GM10248 (cell line): ENCODE measurements at regions of chr2 and their contacts with region 1.

Region 1: DNA sequence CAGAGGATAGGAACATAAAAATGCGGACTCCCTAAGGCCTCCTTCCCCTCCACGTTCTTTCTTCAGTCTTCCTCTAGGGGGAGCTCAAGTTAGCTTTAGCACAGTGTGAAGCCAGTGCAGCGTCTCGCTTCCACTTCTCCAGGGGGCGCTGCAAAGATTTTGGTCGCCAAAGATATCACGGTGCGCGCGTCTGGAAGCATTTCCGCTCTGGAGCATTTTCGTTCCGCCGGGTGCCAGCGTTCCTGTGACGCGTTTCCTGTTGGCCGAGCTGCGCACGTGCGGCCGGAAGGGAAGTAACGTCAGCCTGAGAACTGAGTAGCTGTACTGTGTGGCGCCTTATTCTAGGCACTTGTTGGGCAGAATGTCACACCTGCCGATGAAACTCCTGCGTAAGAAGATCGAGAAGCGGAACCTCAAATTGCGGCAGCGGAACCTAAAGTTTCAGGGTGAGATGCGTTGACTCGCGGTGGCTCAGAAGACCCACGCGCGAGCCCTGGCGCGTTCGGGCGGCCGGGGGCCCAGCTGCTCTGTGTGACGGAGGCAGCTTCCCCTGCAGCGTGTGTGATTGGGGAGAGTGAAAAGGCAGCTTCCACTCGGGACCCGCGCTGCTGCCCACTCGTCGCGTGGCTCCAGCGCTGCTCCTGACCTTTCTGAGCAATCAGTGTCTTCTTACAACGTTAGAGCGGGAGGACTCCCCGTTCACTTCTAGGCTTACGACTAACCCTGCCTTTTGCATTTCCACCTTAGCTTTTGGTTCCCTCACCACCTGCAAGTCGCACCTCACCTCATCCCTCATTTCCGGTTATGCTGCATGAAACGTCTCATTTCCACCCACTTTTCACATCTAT is at the start of gene DDX18:
- DNase-seq: peak; percentile 87
- CTCF ChIP-seq: peak; percentile 99

Region 2: DNA sequence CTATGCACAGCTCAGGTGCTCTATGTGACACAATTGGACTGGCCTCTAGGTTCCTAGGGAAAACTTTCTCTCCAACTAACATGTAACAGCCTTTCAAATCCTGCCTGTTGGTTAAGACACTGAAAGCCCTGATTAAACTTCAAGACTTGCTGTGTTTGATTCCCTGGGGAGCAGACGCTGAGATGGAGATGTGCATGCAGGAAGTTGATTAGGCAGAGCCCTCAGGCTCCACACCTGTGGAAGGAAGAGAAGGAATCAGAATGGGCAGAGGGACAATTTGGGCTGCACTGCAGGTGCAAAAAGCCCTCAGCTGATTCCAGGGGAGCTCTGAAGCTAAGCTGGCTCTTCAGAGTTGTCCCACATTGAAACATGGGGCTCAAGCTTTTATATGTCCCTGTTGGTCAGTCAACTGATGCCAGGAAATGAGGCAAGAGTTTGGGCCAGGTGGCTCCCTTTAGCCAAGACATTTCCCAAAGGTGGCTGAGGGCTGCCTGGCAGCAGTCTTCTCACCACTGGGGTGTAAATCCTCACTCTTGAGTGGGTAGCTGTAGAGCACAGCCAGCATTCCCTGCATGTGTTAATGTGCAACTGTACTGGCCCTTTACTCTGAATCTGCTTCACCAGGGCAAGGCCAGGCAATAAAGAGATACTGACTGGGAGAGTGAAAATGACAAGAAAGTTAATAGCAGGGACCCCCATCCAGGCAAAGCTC is 199.7 kb before region 1 on chr2:
- CTCF ChIA-PET with region 1: no interaction called
- POLR2A ChIA-PET with region 1: no interaction called
- DNase-seq: no peak
- CTCF ChIP-seq: no peak

Region 3: GRCh38 chr2:117801826-117802225 is 12.8 kb before region 1 on chr2:
- CTCF ChIA-PET with region 1: interaction called, 34 read pairs
- POLR2A ChIA-PET with region 1: no interaction called
- DNase-seq: no peak
- CTCF ChIP-seq: no peak

Region 4: GRCh38 chr2:117825437-117825836 is 10.8 kb after region 1 on chr2:
- CTCF ChIA-PET with region 1: interaction called, 21 read pairs
- POLR2A ChIA-PET with region 1: no interaction called
- DNase-seq: no peak
- CTCF ChIP-seq: no peak

Region 5: DNA sequence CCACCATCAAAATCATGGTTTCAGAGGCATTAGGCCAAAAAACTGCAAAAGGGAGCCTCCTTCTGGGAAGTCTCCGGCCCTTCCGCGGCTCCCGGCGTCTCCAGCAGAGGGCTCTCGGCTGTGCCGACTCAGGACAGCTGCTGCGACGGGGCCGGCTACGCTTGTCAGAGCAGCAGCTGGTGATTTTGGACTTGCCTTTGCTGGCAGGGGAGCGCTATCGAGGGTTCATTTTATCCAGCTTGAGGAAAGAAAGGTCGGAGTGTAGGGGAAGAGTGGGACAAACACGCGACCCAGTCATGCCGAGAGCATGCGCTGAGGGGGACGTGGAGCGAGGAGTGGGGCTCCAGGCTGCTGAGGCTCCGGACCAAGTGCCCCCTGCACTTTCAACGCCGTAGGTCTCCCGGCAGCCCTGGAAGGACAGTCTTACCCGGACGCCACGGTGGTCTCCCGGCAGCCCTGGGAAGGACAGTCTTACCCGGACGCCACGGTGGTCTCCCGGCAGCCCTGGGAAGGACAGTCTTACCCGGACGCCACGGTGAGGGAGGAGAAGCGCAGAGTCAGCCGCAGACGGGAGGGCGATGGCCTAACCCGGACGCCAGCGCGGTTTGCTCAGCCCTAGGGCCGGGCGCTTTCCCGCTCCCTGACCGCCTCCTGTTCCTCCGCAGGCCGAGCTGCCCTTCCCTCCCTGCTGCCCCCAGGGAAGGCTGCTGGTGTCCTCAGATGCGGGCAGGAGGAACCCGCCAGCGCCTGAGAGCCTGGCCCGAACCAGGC is 21.5 kb after region 1 on chr2:
- CTCF ChIA-PET with region 1: interaction called, 39 read pairs
- POLR2A ChIA-PET with region 1: no interaction called
- DNase-seq: peak; percentile 78
- CTCF ChIP-seq: peak; percentile 79

Region 6: GRCh38 chr2:117942551-117942950 is 127.9 kb after region 1 on chr2:
- CTCF ChIA-PET with region 1: interaction called, 10 read pairs
- POLR2A ChIA-PET with region 1: no interaction called
- DNase-seq: no peak
- CTCF ChIP-seq: no peak

Region 7: GRCh38 chr2:117997872-117998454 is 183.3 kb after region 1 on chr2:
- CTCF ChIA-PET with region 1: interaction called, 127 read pairs
- POLR2A ChIA-PET with region 1: interaction called, 3 read pairs
- DNase-seq: no peak
- CTCF ChIP-seq: no peak

Region 8: GRCh38 chr2:118013724-118014491 is 199.3 kb after region 1 on chr2 and contains the start of gene CCDC93:
- CTCF ChIA-PET with region 1: interaction called, 127 read pairs
- POLR2A ChIA-PET with region 1: no interaction called
- DNase-seq: peak; percentile 98
- CTCF ChIP-seq: no peak